ENCODE measurements at regions of chr7 and their contacts with region 1.

Region 1: DNA sequence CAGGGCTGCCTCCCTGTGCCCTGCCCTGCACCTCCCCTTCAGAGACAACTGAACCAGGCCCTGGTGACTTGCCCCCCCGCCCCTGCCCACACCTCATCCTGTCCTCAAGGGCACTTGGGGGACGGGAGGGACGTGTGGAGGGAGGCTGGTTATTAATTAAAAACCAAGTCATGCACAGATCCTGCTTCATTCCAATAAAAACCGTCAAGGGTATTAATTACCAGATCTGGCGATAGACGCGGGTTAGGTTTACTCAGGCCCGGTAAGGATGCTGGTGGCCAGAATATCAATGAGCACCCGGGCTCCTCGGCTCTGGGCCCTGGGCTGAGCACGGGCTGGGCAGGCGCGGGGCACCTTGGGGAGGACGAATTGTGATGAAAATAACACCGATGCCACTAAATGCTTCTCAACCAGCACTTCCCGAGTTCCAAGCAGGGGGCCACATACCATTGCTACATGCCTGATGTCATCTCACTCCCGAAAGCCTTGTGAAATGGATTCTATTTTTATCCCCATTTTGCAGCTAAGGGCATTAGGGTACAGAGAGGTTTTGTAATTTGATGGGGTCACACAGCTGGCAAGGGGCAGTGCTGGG is 24.5 kb upstream of the GTF2IRD1 start:
- DNase-seq: no peak
- H3K4me3 Mint-ChIP-seq: no peak overlapping the region
- H3K27ac Mint-ChIP-seq: no peak overlapping the region
- H3K4me1 Mint-ChIP-seq: no peaks in the 10 kb centered on the region
- H3K27me3 Mint-ChIP-seq: no peaks in the 10 kb centered on the region

Region 2: DNA sequence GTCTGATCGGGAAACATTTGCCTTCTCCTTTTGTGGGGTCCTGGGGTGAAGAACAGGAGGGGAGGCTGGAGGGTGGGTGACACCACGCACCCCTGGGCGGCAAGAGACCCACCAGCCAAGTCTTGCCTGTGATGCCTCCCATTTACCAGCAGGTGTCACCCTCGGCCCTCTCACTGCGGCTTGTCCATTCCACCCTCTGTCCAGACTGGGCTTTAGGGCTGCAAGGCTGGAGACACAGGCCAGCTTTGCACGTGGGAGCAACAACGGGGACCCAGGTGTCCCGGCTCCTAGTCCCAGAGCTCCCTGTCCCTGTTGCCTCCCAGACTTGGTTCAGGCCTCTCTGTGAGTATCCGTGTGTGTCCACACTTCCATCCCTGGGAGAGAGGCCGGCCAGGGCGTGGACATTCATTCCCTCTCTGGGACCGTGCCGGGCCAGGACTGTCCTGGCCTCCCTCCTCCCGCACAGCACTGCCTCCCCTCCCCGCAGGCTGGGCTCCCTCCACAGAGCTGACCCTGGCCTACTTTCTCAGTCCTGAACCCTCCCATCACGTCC is 11.8 kb before region 1 on chr7:
- CTCF ChIA-PET with region 1: interaction called, 12 read pairs
- POLR2A ChIA-PET with region 1: no interaction called
- DNase-seq: peak; percentile 57
- H3K4me3 Mint-ChIP-seq: no peak overlapping the region
- H3K27ac Mint-ChIP-seq: no peak overlapping the region
- H3K4me1 Mint-ChIP-seq: no peaks in the 10 kb centered on the region
- H3K27me3 Mint-ChIP-seq: peaks cover 3% of the 10 kb centered on the region

Region 3: GRCh38 chr7:74449809-74450397 is 20.7 kb after region 1 on chr7:
- CTCF ChIA-PET with region 1: no interaction called
- POLR2A ChIA-PET with region 1: no interaction called
- DNase-seq: peak; percentile 77
- H3K4me3 Mint-ChIP-seq: no peak overlapping the region
- H3K27ac Mint-ChIP-seq: no peak overlapping the region
- H3K4me1 Mint-ChIP-seq: peaks cover 19% of the 10 kb centered on the region
- H3K27me3 Mint-ChIP-seq: peaks cover 1% of the 10 kb centered on the region

Measured in activated CD4-positive, alpha-beta T cell treated with anti-CD3 and anti-CD28 coated beads, Interleukin-2, amount 10 ng/mL, durations not matched to agents 7 days and 5 days (primary cell).